Ascending aorta (tissue), 2 donors: ENCODE measurements at regions of chr20 and their contacts with region 1.

Region 1: DNA sequence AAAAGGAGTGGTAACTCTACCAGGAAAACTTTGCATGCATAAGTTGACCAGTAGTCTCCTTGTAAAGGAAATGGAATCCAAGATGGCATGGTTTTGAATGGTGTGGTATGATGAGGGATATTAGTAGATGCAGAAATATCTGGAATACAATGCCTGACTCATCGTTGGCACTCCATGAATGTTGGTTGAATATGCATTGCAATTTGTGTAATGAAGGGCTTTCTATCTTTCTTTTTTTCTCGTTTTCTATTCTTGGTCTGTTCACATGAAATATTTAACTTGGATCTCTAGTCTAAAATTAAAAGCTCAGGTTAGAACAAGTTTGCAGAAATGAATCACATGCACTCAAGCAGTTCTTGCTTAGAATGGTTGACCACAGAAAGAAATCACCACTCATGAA is 277.3 kb upstream of the PRND start:
- DNase-seq: no peak
- H3K4me3 ChIP-seq: no peak overlapping the region
- H3K27ac ChIP-seq: peak overlapping the region; percentile 58 to 73
- H3K4me1 ChIP-seq: peaks cover 9 to 34% of the 10 kb centered on the region in 2 donors
- H3K27me3 ChIP-seq: no peaks in the 10 kb centered on the region
- CTCF ChIP-seq: no peak

Region 2: DNA sequence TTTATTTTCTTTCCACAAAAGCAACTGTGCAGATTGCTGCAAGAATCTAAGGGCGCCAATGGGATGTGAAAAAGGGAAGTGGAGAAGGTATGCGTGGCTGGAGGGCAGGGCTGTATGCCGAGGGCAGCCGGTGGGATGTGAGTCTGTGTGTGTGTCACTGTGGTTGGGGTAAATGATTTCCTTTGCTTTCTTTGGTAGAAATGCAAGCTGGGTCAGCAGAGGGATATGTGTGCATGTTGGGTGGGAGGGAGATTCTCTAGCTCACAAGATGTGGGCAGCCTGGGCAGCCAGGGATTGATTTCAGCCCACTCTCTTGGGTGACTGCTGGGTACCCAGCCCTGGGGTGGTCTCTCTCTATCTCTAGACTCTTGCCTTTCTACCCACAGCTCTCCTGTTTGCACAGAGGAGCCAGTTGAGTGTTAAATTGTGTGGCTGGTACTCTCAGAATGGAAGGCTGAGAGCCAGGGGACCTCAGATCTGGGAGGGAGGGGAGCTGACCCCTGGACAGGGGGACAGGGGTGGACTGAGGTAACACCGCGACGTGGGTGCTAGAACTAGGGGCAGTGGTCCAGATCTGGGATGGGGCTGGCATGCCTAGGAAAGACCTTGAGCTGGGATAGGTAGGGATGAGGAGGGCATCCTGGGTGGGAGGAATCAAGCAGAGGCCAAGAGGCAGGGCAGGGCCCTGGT is 292.3 kb before region 1 on chr20:
- intact Hi-C with region 1: no loop called
- DNase-seq: no peak
- H3K4me3 ChIP-seq: no peak overlapping the region
- H3K27ac ChIP-seq: no peak overlapping the region
- H3K4me1 ChIP-seq: peaks cover 4 to 8% of the 10 kb centered on the region in 2 donors
- H3K27me3 ChIP-seq: no peaks in the 10 kb centered on the region
- CTCF ChIP-seq: no peak

Region 3: DNA sequence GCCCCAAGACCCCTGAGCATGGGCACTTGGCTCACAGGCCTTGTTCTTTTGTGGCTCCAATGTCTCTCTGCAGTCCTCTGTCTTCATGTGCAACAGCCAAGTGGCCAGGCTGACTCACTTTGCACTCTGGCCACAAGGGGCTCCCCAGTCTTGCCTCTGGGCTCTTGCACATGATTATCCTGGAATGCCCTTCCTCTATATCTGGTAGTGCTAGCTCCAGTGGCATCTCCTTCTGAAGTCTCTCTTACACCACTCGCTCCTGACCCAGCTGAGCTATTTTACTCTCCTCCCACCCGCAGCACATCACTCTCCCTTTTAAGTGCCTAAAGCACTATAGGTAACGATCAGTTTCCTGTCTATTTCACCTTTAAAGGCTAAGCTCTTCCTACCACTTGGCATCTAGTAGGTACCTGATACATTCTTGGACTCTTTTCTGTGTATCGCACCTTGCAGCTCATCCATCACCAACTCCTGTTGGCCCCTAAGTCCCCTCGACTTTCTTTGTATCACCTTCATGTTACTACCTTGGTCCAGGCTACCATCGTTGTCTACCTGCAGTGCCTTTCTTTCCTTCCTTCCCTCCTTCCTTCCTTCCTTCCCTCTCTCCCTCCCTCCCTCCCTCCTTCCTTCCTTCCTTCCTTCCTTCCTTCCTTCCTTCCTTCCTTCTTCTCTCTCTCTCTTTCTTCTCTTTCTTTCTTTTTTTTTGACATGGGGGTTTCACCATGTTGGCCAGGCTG is 217.2 kb before region 1 on chr20:
- intact Hi-C with region 1: loop called (anchors 5 kb)
- DNase-seq: no peak
- H3K4me3 ChIP-seq: no peak overlapping the region
- H3K27ac ChIP-seq: peak overlapping the region; percentile 82 to 89
- H3K4me1 ChIP-seq: peaks cover 0 to 39% of the 10 kb centered on the region in 2 donors
- H3K27me3 ChIP-seq: no peaks in the 10 kb centered on the region
- CTCF ChIP-seq: peak in 2 of 3 experiments; percentile 35 to 43

Region 4: GRCh38 chr20:4297127-4297826 is 147.1 kb before region 1 on chr20:
- intact Hi-C with region 1: loop called (anchors 5 kb)
- DNase-seq: peak in 1 of 2 donors; percentile 90
- H3K4me3 ChIP-seq: no peak overlapping the region
- H3K27ac ChIP-seq: peak overlapping the region; percentile 64 to 82
- H3K4me1 ChIP-seq: peaks cover 0 to 8% of the 10 kb centered on the region in 2 donors
- H3K27me3 ChIP-seq: no peaks in the 10 kb centered on the region
- CTCF ChIP-seq: no peak

Region 5: DNA sequence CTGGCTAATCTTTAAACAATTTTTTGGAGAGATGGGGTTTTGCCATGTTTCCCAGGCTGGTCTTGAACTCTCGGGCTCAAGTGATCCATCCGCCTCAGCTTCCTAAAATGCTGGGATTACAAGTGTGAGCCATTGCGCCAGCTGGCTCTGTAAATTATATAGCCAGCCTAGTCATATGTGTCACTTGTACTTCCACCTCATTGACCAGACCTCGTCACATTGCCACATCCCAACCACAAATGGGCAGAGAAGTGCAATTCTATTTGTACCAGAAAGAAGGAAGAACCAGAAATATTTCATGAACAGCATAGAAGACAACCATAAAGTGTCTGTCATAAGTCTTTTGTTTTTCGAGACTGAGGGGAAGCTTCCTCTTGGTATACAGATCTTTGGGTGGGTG is 124.1 kb before region 1 on chr20:
- intact Hi-C with region 1: no loop called
- DNase-seq: peak in 1 of 2 donors; percentile 70
- H3K4me3 ChIP-seq: no peak overlapping the region
- H3K27ac ChIP-seq: no peak overlapping the region
- H3K4me1 ChIP-seq: peaks cover 0 to 4% of the 10 kb centered on the region in 2 donors
- H3K27me3 ChIP-seq: no peaks in the 10 kb centered on the region
- CTCF ChIP-seq: no peak

Region 6: GRCh38 chr20:4519530-4519929 is 75.1 kb after region 1 on chr20:
- intact Hi-C with region 1: no loop called
- DNase-seq: peak in 1 of 2 donors; percentile 65
- H3K4me3 ChIP-seq: no peak overlapping the region
- H3K27ac ChIP-seq: no peak overlapping the region
- H3K4me1 ChIP-seq: no peaks in the 10 kb centered on the region
- H3K27me3 ChIP-seq: no peaks in the 10 kb centered on the region
- CTCF ChIP-seq: peak; percentile 48 to 57 (median 49)